HepG2 (cell line): ENCODE measurements at regions of chr12 and their contacts with region 1.

Region 1: GRCh38 chr12:38316391-38317129 is at the start of gene ALG10B:
- DNase-seq: peak; percentile 92
- ATAC-seq: peak; percentile 100
- H3K4me3 ChIP-seq: peak within 1 kb of the TSS; percentile 78 to 85 (median 80)
- H3K27ac ChIP-seq: peak within 1 kb of the TSS; percentile 78
- H3K4me1 ChIP-seq: peaks cover 10% of the 10 kb centered on the region; the same call in 1 of the 2 replicates
- H3K27me3 ChIP-seq: no peaks in the 10 kb centered on the region
- CTCF ChIP-seq: peak; percentile 64
- EP300 ChIP-seq: peak in 1 of 2 experiments; percentile 34; a peak in 1 of 4 replicates
- POLR2A ChIP-seq: peak; percentile 42 to 44; a peak in 2 of 4 replicates
- RAD21 ChIP-seq: no peak
- total RNA-seq, gene ALG10B: 6.3 and 9.3 TPM in 2 replicates

Region 2: DNA sequence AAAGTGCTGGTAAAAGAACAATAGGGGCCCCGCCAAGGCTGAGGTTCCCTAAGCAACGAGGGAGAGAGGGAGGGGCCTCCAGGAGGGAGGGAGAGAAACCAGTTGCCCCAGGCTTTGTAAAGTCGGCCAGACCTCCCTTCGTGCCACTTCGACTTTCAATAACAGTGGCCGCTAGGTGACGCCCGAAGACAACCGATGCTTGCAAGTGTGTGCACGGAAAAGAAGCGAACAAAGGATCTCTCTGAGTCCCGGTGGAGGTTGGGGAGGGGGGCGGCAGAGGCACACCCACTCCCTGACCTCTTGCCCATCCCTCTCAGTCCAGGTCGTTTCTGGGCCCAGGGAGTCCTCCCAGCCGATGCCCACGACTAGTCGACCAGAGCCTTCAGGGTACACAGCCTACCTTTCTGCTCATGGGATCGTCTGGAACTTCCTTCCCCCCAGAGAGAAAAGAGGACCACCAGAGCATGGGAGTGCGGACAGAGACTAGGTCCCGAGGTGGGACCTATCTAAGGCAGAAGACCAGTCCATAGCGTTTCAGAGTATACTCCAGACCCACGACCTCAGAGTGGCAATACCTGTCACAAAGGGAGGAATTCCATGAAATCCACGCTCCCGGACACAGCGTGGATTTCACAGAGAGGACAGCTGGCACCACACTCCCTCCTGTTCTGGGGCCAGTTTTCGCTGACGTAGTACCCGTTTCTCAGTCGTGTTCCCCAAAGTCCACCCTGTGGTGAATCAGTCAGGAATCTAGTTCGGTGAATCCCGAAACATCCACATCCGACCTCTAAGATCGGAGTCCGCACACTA is 262.7 kb before region 1 on chr12:
- CTCF ChIA-PET with region 1: interaction called, 26 read pairs
- POLR2A ChIA-PET with region 1: no interaction called
- in situ Hi-C with region 1: loop called (anchors 5 kb)
- intact Hi-C with region 1: loop called (anchors 1 kb)
- DNase-seq: peak; percentile 70
- ATAC-seq: peak; percentile 91
- H3K4me3 ChIP-seq: peak overlapping the region in 1 of 3 experiments; percentile 40; a peak in 1 of 6 replicates
- H3K27ac ChIP-seq: no peak overlapping the region
- H3K4me1 ChIP-seq: no peaks in the 10 kb centered on the region
- H3K27me3 ChIP-seq: no peaks in the 10 kb centered on the region
- CTCF ChIP-seq: peak; percentile 95
- EP300 ChIP-seq: no peak
- POLR2A ChIP-seq: no peak
- RAD21 ChIP-seq: peak; percentile 89

Region 3: DNA sequence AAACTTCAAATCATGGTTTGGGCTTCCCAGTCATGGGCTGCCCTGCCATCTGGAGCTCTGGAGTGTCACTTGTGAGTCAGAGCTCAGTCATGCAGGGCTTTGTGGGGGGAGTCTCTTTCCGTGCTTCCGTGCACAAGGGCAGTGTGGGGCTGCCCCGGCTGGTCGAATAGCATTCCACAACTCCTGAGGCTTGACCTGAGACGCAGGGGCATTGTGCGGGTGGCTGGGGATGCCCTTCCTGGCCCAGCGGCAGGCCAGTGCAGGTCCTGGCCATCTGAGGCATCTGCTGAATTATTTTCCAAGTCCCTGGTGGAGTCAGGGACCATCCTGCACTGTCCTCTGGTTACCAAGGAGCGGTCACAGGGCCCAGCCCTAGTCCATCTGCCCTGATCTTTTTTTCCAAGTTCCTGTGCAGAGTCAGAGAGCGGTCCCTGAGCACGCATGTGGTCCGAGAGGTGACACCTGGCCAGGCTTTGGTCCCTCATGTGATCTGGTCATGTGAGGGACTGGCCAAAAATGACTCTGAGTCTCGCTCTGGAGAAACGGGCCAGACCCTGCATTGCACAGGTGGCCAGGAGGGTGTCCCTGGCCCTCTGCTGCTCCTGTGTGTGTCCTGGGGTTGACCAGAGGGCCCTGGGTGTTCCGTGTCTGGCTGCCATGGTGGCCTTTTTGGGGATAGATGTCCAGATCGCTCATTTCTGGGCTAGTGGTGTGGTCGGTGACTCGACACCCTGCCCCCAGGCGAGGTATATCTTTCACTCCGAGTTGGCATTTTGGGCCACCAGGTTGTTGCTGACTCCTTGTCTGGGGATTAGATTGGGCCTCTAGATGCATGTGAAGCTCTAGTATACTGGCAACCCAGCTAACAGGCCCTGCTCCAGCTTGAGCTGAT is 166.9 kb before region 1 on chr12:
- CTCF ChIA-PET with region 1: no interaction called
- POLR2A ChIA-PET with region 1: no interaction called
- in situ Hi-C with region 1: loop called (anchors 10 kb)
- intact Hi-C with region 1: no loop called
- DNase-seq: no peak
- ATAC-seq: no peak; the same call in 2 of the 3 replicates
- H3K4me3 ChIP-seq: no peak overlapping the region
- H3K27ac ChIP-seq: no peak overlapping the region
- H3K4me1 ChIP-seq: no peaks in the 10 kb centered on the region
- H3K27me3 ChIP-seq: peaks cover 0 to 21% of the 10 kb centered on the region in 2 experiments; a peak in 4 of 5 replicates
- CTCF ChIP-seq: no peak
- EP300 ChIP-seq: no peak
- POLR2A ChIP-seq: no peak
- RAD21 ChIP-seq: no peak

Region 4: DNA sequence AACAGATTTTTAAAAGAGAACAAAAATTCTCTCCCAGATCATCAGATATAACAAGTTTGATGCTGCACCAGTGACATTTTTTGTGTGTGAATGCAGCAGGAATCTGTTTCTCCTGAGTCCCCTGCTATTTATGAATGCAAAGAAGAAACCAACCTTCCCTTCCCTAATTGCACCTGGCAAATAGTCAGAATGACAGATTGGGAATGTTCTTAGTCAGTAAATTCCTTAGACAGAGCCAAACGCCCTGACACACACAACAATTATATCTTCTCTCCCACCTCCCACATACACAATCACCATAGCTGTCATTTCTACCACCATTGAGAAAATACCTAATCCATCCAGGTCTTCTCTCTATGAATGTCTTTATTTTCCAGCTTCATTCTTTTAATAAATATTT is 174.4 kb after region 1 on chr12:
- CTCF ChIA-PET with region 1: no interaction called
- POLR2A ChIA-PET with region 1: no interaction called
- in situ Hi-C with region 1: no loop called
- intact Hi-C with region 1: no loop called
- DNase-seq: no peak
- ATAC-seq: no peak
- H3K4me3 ChIP-seq: no peak overlapping the region
- H3K27ac ChIP-seq: no peak overlapping the region
- H3K4me1 ChIP-seq: no peaks in the 10 kb centered on the region
- H3K27me3 ChIP-seq: no peaks in the 10 kb centered on the region; a peak in 1 of 5 replicates
- CTCF ChIP-seq: no peak
- EP300 ChIP-seq: no peak
- POLR2A ChIP-seq: no peak
- RAD21 ChIP-seq: no peak